ENCODE measurements at regions of chrX and their contacts with region 1.

Region 1: DNA sequence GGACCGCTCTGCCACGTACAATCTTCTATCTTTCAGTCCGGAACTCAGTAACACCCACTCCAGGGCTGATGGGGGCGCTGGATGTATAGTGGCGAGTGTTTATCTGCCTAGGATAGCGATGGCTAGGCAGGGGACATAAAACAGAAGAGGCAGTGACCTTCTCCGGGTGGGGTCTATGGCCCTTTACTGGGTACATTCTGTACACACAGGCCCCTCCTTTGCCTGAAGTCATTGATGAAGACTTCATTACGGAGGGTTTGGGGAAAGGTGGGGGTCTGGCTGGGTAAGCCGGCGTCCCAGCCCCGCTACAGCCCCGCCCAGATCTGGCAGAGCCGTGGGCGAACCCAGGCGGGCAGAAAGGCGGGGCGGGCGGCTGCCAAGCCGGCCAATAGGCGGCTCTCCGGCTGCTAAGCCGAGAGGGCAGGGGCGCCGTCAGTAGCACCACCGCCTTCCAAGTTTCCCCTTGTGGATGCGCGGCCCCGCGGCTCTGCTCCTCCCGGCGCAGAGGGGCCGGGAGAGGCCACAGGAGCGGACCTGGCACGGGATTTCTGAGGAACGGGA is at the start of gene CHST7:
- DNase-seq: peak; percentile 67 to 80
- ATAC-seq: peak; percentile 87 to 94
- H3K4me3 ChIP-seq: peak within 1 kb of the TSS; percentile 76
- H3K27ac ChIP-seq: peak within 1 kb of the TSS; percentile 88 to 98
- H3K4me1 ChIP-seq: peaks cover 36% of the 10 kb centered on the region
- CTCF ChIP-seq: peak; percentile 61
- EP300 ChIP-seq: no peak
- POLR2A ChIP-seq: peak; percentile 40; the same call in 1 of the 2 replicates
- RAD21 ChIP-seq: peak; percentile 54 to 62
- polyA plus RNA-seq, gene CHST7: 6.3 and 6.5 TPM in 2 replicates

Region 2: DNA sequence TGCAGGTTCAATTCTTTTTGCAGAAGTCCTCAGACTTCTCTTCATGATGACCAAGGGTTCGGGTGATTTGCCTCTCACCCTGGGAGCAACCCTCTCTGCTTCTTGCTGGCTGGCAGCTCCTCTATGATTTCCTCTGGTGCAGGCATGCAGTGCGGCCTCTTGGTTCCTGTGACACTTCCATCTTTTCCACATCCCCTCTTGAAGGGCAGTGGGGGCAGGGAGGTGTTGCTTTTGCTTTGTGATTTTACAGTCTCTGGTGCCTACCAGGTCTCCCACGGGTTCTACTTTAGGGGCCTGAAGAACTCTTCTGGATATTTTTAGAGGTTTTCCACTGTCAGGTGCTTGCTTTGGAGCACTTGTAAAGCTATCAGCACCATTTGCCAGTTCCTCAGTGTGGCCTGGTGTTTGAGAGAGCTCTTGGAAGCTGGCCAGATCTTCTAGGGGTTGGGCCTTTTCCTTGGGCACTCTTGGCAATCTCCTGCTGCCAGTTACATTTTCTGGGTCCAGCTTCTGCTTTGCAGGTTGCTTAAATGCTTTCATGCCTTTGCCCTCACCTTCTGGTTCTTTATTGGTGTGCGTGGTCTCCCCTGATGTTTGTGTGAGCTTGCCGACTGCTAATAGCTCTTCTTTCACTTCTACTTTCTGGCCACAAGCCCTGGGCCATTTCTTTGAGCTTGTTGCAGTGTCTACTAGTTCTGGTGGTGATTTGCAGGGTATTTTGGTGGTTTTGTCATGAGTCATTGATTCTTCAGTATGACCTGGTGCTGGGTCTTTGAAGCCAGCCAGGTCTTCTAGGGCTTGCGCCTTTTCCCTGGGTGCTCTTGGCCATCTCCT is 11.4 kb before region 1 on chrX:
- CTCF ChIA-PET with region 1: interaction called, 11 read pairs
- POLR2A ChIA-PET with region 1: interaction called, 3 read pairs
- DNase-seq: no peak
- ATAC-seq: no peak
- H3K4me3 ChIP-seq: no peak overlapping the region
- H3K27ac ChIP-seq: peak overlapping the region; percentile 20 to 38; a peak in 2 of 6 replicates
- H3K4me1 ChIP-seq: peaks cover 15% of the 10 kb centered on the region
- CTCF ChIP-seq: no peak
- EP300 ChIP-seq: no peak
- POLR2A ChIP-seq: no peak
- RAD21 ChIP-seq: no peak

Measured in A549 (cell line).